Activated CD4-positive, alpha-beta memory T cell treated with anti-CD3 and anti-CD28 coated beads for 36 hours (primary cell): ENCODE measurements at regions of chr3 and their contacts with region 1.

Region 1: GRCh38 chr3:138834359-138835212 is at the start of gene PIK3CB:
- DNase-seq: peak; percentile 90
- H3K4me3 Mint-ChIP-seq: peak within 1 kb of the TSS; percentile 93
- H3K27ac Mint-ChIP-seq: peak within 1 kb of the TSS; percentile 97
- H3K4me1 Mint-ChIP-seq: peaks cover 28% of the 10 kb centered on the region
- H3K27me3 Mint-ChIP-seq: no peaks in the 10 kb centered on the region
- total RNA-seq, gene PIK3CB: 23.0 to 24.8 TPM

Region 2: DNA sequence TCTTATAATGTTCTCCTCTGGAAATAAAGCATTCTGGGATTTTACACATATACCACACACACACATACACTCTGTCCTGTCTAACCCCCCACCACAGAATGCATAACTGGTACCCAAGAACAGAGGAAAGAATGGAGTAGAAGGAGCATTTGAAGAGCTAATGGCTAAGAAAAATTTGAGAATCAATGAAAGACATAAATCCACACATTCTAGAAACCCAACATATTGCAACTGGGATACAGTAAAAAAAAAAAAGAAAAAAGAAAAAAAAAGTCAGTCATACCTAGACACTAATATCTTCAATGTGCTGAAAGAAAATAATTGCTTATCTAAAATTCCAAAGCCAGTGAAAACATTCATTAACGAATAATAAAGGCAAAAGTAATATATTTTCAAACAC is 261.4 kb before region 1 on chr3:
- CTCF ChIA-PET with region 1: no interaction called
- POLR2A ChIA-PET with region 1: no interaction called
- intact Hi-C with region 1: loop called (anchors 5 kb)
- DNase-seq: no peak
- H3K4me3 Mint-ChIP-seq: no peak overlapping the region
- H3K27ac Mint-ChIP-seq: no peak overlapping the region
- H3K4me1 Mint-ChIP-seq: peaks cover 26% of the 10 kb centered on the region
- H3K27me3 Mint-ChIP-seq: peaks cover 2% of the 10 kb centered on the region

Region 3: DNA sequence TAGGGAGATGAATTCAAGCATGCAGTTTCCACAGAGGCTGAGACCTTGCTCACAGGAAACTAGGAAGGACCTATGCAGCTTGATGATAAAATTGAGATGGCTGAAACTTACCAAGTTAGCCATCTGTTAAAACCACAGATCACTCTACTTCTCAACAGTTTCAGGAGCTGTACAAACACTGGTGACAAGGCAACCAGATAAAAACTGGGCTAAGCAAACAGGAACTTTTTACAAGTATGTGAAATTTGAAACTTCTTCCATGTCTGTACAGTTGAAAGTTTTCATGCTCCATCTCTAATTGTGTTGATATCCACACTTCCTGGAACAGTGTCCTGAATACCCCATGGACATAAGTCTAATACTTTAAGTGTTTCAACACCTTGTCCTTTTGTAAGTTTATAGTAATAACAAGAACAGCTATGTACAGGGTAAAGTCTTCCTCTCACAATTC is 147.8 kb before region 1 on chr3:
- CTCF ChIA-PET with region 1: no interaction called
- POLR2A ChIA-PET with region 1: no interaction called
- intact Hi-C with region 1: loop called (anchors 1 kb)
- DNase-seq: no peak
- H3K4me3 Mint-ChIP-seq: no peak overlapping the region
- H3K27ac Mint-ChIP-seq: peak overlapping the region; percentile 73
- H3K4me1 Mint-ChIP-seq: peaks cover 13% of the 10 kb centered on the region
- H3K27me3 Mint-ChIP-seq: no peaks in the 10 kb centered on the region

Region 4: DNA sequence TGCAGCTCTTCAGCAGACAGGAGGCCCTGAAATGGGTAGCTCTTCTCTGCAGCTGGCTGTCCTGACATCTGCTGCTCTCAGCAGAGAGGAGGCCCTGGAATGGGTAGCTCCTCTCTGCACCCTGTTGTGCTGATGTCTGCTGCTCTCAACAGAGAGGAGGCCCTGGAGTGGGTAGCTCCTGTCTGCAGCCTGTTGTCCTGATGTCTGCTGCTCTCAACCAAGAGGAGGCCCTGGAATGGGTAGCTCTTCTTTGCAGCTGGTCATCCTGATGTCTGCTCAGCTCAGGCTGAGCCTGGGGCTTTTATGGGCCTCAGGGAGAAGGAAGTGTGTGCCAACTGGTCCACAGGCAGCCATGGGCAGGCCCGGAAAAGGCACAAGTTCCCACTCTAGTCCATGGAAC is 66.5 kb before region 1 on chr3:
- CTCF ChIA-PET with region 1: no interaction called
- POLR2A ChIA-PET with region 1: no interaction called
- intact Hi-C with region 1: loop called (anchors 2 kb)
- DNase-seq: peak; percentile 23
- H3K4me3 Mint-ChIP-seq: no peak overlapping the region
- H3K27ac Mint-ChIP-seq: no peak overlapping the region
- H3K4me1 Mint-ChIP-seq: peaks cover 18% of the 10 kb centered on the region
- H3K27me3 Mint-ChIP-seq: no peaks in the 10 kb centered on the region

Region 5: GRCh38 chr3:138774529-138775253 is 59.9 kb before region 1 on chr3:
- CTCF ChIA-PET with region 1: no interaction called
- POLR2A ChIA-PET with region 1: no interaction called
- intact Hi-C with region 1: loop called (anchors 1 kb)
- DNase-seq: peak; percentile 58
- H3K4me3 Mint-ChIP-seq: no peak overlapping the region
- H3K27ac Mint-ChIP-seq: no peak overlapping the region
- H3K4me1 Mint-ChIP-seq: peaks cover 32% of the 10 kb centered on the region
- H3K27me3 Mint-ChIP-seq: no peaks in the 10 kb centered on the region

Region 6: GRCh38 chr3:138890555-138891187 is 56.1 kb after region 1 on chr3:
- CTCF ChIA-PET with region 1: no interaction called
- POLR2A ChIA-PET with region 1: no interaction called
- intact Hi-C with region 1: loop called (anchors 2 kb)
- DNase-seq: no peak
- H3K4me3 Mint-ChIP-seq: no peak overlapping the region
- H3K27ac Mint-ChIP-seq: no peak overlapping the region
- H3K4me1 Mint-ChIP-seq: no peaks in the 10 kb centered on the region
- H3K27me3 Mint-ChIP-seq: peaks cover 2% of the 10 kb centered on the region